AG04450 (cell line): ENCODE measurements at regions of chr6 and their contacts with region 1.

Region 1: GRCh38 chr6:53651764-53652401 is 13.7 kb downstream of the KLHL31 start:
- DNase-seq: no peak
- H3K4me3 ChIP-seq: peak overlapping the region; percentile 75
- H3K27ac ChIP-seq: no peak overlapping the region
- H3K27me3 ChIP-seq: no peaks in the 10 kb centered on the region
- CTCF ChIP-seq: peak; percentile 24

Region 2: GRCh38 chr6:53517056-53517455 is 134.8 kb before region 1 on chr6:
- CTCF ChIA-PET with region 1: interaction called, 41 read pairs
- POLR2A ChIA-PET with region 1: interaction called, 10 read pairs
- DNase-seq: no peak
- H3K4me3 ChIP-seq: no peak overlapping the region
- H3K27ac ChIP-seq: no peak overlapping the region
- H3K27me3 ChIP-seq: no peaks in the 10 kb centered on the region
- CTCF ChIP-seq: no peak

Region 3: GRCh38 chr6:53544470-53545308 is 107.2 kb before region 1 on chr6 and contains the start of gene GCLC:
- CTCF ChIA-PET with region 1: interaction called, 22 read pairs
- POLR2A ChIA-PET with region 1: interaction called, 8 read pairs
- DNase-seq: peak; percentile 89
- H3K4me3 ChIP-seq: peak within 1 kb of the TSS; percentile 95
- H3K27ac ChIP-seq: peak within 1 kb of the TSS; percentile 75
- H3K27me3 ChIP-seq: no peaks in the 10 kb centered on the region
- CTCF ChIP-seq: peak; percentile 47
- polyA plus RNA-seq, gene GCLC: 74.8 and 89.3 TPM in 2 replicates

Region 4: DNA sequence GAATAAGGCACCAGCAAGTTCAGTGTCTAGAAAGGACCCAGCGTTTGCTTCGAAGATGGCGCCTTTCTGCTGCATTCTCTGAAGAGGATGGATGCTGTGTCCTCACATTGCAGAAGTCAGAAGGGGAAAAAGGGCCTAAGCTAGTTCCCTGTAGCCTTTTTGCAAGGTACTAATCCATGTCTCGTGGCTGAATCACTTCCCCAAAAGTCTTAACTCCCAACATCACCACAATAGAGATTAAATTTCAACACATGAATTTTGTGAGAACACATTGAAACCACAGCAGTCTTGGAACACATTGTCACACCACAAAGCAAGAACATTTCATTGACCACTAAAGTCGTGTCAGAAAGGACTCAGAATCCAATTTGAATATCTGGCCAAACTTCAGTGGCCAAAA is 28.4 kb before region 1 on chr6:
- CTCF ChIA-PET with region 1: no interaction called
- POLR2A ChIA-PET with region 1: no interaction called
- DNase-seq: no peak
- H3K4me3 ChIP-seq: no peak overlapping the region
- H3K27ac ChIP-seq: no peak overlapping the region
- H3K27me3 ChIP-seq: no peaks in the 10 kb centered on the region
- CTCF ChIP-seq: no peak